Activated CD8-positive, alpha-beta memory T cell treated with anti-CD3 and anti-CD28 coated beads, Interleukin-2, amount 10 ng/mL, durations not matched to agents 7 days and 5 days (primary cell): ENCODE measurements at regions of chr6 and their contacts with region 1.

Region 1: DNA sequence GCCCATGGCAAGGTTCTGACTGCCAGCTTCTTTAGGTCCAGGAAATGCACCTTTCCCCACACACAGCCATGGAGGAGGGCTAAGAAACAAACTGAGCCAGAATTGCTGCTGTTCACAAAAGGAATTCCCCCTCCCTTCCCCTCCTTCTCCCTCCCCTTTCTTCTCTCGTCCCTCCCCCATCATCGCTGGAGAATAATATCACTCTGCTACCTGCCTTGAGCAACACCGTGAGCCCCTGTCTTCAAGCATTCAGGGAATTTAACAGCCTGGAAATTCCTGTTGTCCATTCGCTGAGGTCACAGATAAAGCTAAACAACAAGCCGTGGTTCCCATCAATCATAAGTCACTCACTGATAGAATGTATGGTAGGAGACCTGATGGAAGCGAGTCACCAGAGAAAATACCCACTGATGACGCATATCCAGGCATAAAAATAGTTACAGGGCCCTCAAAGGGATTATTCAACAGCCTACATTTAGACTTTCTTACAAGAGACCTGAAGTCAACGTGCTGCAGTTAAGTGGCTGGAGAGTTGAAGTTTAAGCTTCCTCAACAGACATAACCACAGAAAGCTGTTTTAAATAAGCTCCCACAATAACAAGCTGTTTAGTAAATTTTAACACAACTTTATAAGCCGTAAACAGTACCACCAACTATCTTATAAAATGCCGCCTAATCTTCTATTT is 59.7 kb downstream of the HIVEP2 start:
- DNase-seq: peak; percentile 62
- ATAC-seq: peak; percentile 84
- H3K4me3 Mint-ChIP-seq: peak overlapping the region; percentile 73
- H3K27ac Mint-ChIP-seq: peak overlapping the region; percentile 96
- H3K4me1 Mint-ChIP-seq: peaks cover 65% of the 10 kb centered on the region
- H3K27me3 Mint-ChIP-seq: no peaks in the 10 kb centered on the region

Region 2: DNA sequence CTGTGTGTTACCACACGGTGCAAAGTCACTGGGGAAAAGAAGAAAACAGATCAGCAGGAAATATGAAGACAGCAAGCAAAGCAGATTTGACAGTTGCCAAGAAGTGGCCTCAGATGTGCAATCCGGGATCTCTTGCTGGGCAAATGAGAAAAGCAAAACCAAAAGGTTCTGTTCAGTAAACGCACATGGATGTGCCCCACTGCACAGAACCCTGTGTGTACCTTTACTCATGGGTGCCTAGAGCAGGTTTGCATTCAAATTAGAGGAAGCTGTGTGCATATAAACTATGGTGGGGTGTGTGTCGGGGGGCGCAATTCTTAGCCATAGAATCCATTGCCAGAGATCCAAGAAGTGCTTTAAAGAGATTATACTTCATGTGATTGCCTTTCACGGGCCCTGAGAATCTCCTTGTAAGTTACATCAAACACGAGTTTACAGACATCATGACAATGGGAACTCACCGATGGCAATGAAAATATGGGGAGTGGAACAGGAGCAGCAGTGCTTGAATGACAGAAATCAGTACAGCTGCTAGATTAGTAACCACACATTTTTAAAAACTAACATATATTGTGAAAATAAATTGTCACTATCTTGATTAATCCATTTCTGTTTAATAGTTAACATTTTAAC is 429.3 kb before region 1 on chr6:
- CTCF ChIA-PET with region 1: no interaction called
- DNase-seq: no peak
- ATAC-seq: no peak
- H3K4me3 Mint-ChIP-seq: no peak overlapping the region
- H3K27ac Mint-ChIP-seq: no peak overlapping the region
- H3K4me1 Mint-ChIP-seq: no peaks in the 10 kb centered on the region
- H3K27me3 Mint-ChIP-seq: peaks cover 3% of the 10 kb centered on the region

Region 3: GRCh38 chr6:142871910-142872331 is 13.4 kb before region 1 on chr6:
- CTCF ChIA-PET with region 1: interaction called, 25 read pairs
- DNase-seq: peak; percentile 85
- ATAC-seq: peak; percentile 96
- H3K4me3 Mint-ChIP-seq: peak overlapping the region; percentile 26
- H3K27ac Mint-ChIP-seq: peak overlapping the region; percentile 37
- H3K4me1 Mint-ChIP-seq: peaks cover 68% of the 10 kb centered on the region
- H3K27me3 Mint-ChIP-seq: no peaks in the 10 kb centered on the region

Region 4: DNA sequence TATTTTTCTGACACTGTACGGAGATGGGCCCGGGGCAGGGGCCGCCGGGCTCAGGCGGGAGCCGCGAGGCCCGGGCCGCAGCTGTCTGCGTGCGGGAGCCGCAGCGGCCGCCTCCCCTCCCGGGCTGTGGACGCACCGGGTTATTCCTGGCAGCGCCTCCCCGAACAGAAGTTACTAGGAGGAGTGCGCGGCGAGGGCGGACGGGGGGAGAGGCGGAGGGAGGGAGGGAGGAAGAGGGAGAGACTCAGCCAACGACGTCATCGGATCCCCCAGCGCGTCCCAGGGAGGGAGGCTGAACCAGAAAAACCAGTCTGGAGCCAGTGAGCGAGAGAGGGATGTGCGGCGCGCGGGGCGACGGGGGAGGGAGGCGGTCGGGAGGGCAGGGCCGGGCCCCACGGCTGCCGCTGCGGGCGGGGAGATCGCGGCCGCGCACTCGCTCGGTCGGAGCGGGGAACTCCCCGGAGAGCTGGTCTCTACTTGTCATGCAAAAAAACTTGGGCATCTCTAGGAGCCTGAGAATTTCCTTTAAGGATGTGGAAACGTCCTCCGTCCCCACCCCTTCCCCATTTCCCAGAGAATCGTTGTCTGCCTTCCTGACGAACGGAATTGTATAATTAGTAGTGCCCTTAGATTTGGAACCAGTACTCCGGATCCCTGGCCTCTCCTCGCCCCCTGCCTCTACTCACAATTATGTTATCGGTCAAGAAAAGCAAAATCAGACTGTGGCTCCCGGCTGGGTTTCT is 61.0 kb after region 1 on chr6:
- CTCF ChIA-PET with region 1: interaction called, 10 read pairs
- DNase-seq: peak; percentile 92
- ATAC-seq: peak; percentile 32
- H3K4me3 Mint-ChIP-seq: peak overlapping the region; percentile 84
- H3K27ac Mint-ChIP-seq: peak overlapping the region; percentile 96
- H3K4me1 Mint-ChIP-seq: peaks cover 31% of the 10 kb centered on the region
- H3K27me3 Mint-ChIP-seq: no peaks in the 10 kb centered on the region